ENCODE measurements at regions of chrX and their contacts with region 1.

Region 1: DNA sequence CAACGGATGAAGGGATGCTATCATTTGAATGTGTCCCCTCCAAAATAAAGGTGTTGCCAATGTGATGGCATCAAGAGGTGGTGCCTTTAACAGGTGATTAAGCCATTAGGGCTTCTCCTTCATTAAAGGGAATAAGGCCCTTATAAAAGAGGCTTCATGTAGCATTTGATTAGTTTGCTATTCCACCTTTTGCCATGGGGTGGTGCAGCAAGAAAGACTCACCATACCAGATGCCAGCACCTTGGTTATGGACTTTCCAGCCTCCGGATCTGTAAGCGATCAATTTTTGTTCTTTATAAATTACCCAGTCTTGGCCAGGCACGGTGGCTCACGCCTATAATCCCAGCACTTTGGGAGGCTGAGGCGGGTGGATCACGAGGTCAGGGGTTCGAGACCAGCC is 7.9 kb upstream of the SLC25A43 start:
- DNase-seq: peak; percentile 22
- ATAC-seq: no peak
- H3K4me3 ChIP-seq: no peak overlapping the region
- H3K27ac ChIP-seq: no peak overlapping the region
- H3K4me1 ChIP-seq: peaks cover 25% of the 10 kb centered on the region
- H3K27me3 ChIP-seq: no peaks in the 10 kb centered on the region
- CTCF ChIP-seq: peak; percentile 37
- EP300 ChIP-seq: no peak
- POLR2A ChIP-seq: no peak
- RAD21 ChIP-seq: no peak

Region 2: DNA sequence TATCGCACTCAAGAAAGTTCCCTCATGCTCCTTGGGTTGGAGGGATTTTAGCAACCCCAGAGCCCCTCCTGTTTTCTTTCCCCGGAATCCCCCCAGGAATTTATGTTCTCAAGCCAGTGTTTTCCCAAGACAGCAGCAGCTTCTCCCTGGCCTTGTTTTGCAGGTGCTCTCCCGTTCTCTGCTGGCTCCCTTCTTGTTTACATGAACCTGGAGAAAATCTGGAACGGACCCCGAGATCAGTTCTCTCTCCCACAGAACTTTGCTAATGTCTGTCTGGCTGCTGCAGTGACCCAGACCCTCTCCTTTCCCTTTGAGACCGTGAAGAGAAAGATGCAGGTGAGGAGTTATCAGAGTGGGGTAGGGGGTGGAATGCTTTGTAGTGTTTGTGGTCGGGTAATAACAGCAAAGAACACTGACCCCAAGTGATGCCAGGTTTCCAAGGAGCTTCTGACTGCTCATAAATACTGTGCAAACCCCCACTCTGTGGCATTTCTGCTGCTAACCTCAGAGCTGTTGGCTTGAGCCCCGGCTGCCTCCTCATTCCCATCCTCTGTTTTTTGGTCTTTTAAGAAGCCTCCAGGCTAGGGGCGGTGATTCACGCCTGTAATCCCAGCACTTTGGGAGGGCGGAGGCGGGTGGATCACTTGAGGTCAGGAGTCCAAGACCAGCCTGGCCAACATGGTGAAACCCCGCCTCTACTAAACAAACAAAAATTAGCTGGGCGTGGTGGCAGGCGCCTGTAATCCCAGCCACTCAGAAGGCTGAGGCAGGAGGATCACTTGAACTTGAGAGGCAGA is 18.9 kb after region 1 on chrX:
- CTCF ChIA-PET with region 1: no interaction called
- POLR2A ChIA-PET with region 1: no interaction called
- in situ Hi-C with region 1: no loop called
- intact Hi-C with region 1: no loop called
- DNase-seq: peak; percentile 57
- ATAC-seq: peak; percentile 86
- H3K4me3 ChIP-seq: peak overlapping the region in 1 of 3 experiments; percentile 16; a peak in 1 of 6 replicates
- H3K27ac ChIP-seq: peak overlapping the region; percentile 51
- H3K4me1 ChIP-seq: peaks cover 18% of the 10 kb centered on the region
- H3K27me3 ChIP-seq: no peaks in the 10 kb centered on the region
- CTCF ChIP-seq: no peak
- EP300 ChIP-seq: no peak
- POLR2A ChIP-seq: no peak
- RAD21 ChIP-seq: no peak

Region 3: GRCh38 chrX:119427024-119427794 is 35.9 kb after region 1 on chrX:
- CTCF ChIA-PET with region 1: no interaction called
- POLR2A ChIA-PET with region 1: no interaction called
- in situ Hi-C with region 1: no loop called
- intact Hi-C with region 1: no loop called
- DNase-seq: no peak
- ATAC-seq: no peak
- H3K4me3 ChIP-seq: no peak overlapping the region
- H3K27ac ChIP-seq: no peak overlapping the region
- H3K4me1 ChIP-seq: peaks cover 27% of the 10 kb centered on the region
- H3K27me3 ChIP-seq: no peaks in the 10 kb centered on the region
- CTCF ChIP-seq: no peak
- EP300 ChIP-seq: no peak
- POLR2A ChIP-seq: no peak
- RAD21 ChIP-seq: no peak

Region 4: GRCh38 chrX:119455264-119455663 is 64.0 kb after region 1 on chrX:
- CTCF ChIA-PET with region 1: no interaction called
- POLR2A ChIA-PET with region 1: no interaction called
- in situ Hi-C with region 1: no loop called
- intact Hi-C with region 1: loop called (anchors 1 kb)
- DNase-seq: no peak
- ATAC-seq: no peak
- H3K4me3 ChIP-seq: no peak overlapping the region
- H3K27ac ChIP-seq: no peak overlapping the region
- H3K4me1 ChIP-seq: peaks cover 11% of the 10 kb centered on the region
- H3K27me3 ChIP-seq: no peaks in the 10 kb centered on the region
- CTCF ChIP-seq: no peak
- EP300 ChIP-seq: no peak
- POLR2A ChIP-seq: no peak
- RAD21 ChIP-seq: no peak